ENCODE measurements at regions of chr2 and their contacts with region 1.

Region 1: DNA sequence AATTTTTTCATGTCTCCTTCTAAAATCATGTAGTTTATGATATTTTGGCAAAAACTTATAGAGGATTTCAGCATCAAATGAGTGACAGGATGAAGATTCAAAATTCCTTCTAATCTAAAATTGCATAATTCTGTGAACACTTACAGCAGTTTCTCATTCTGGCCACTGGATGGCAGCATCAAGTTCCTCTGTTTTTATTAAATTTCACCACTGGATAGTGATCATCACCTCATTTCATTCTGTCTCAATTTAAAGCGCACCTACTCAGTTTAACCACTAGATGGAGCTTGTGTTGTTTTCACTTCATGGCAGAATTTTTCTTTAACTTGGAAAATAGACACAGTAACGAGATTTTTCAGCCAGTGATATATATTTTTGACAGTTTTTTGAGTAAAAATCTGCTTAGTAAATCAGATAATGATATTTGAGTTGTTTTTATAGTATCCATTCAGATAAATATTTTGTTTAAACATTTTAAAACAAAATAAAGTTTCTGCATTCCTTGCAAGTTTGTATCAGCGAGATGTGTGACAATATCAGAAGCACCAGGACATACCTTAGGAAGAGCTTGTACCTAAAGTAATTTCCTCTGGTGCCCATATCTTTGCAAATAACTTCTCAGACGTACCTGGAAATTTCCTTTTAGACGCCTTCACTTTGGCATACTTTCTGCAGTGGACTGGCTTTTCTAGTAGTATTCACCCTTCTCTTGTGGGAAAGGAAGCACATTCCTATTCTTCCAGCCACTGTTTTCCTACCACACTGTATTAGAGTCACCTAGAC is 94.7 kb upstream of the ARHGAP15 start:
- DNase-seq: no peak
- H3K4me3 ChIP-seq: no peak overlapping the region
- H3K27ac ChIP-seq: no peak overlapping the region
- H3K4me1 ChIP-seq: no peaks in the 10 kb centered on the region
- H3K27me3 ChIP-seq: no peaks in the 10 kb centered on the region
- CTCF ChIP-seq: peak; percentile 92 to 97 (median 96)
- POLR2A ChIP-seq: no peak

Region 2: DNA sequence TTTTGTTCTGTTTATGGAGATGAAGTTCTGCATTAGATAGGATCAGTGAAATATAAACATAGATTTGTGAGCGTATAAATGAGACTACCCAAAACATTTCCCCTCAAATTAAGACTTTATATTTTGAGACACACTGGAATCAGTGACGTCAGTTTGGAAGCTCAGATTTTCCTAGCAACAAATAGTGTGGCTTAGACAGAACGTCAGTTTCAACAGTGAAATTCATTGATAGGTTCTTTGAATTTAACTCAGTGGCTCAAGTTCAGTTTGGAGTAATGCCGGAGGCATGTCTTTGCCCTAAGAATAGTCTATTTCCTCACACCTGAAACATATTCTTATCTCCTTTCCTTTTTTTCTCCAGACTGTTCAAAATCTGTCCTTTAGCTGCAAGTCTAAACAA is 18.8 kb before region 1 on chr2:
- intact Hi-C with region 1: loop called (anchors 1 kb)
- DNase-seq: no peak
- H3K4me3 ChIP-seq: no peak overlapping the region
- H3K27ac ChIP-seq: no peak overlapping the region
- H3K4me1 ChIP-seq: peaks cover 5% of the 10 kb centered on the region
- H3K27me3 ChIP-seq: no peaks in the 10 kb centered on the region
- CTCF ChIP-seq: no peak
- POLR2A ChIP-seq: no peak

Region 3: GRCh38 chr2:143575340-143575739 is 540.9 kb after region 1 on chr2:
- intact Hi-C with region 1: no loop called
- DNase-seq: no peak
- H3K4me3 ChIP-seq: no peak overlapping the region
- H3K27ac ChIP-seq: no peak overlapping the region
- H3K4me1 ChIP-seq: no peaks in the 10 kb centered on the region
- H3K27me3 ChIP-seq: no peaks in the 10 kb centered on the region
- CTCF ChIP-seq: no peak
- POLR2A ChIP-seq: no peak

Region 4: GRCh38 chr2:144529841-144530240 is 1495.4 kb after region 1 on chr2:
- intact Hi-C with region 1: no loop called
- DNase-seq: no peak
- H3K4me3 ChIP-seq: no peak overlapping the region
- H3K27ac ChIP-seq: no peak overlapping the region
- H3K4me1 ChIP-seq: no peaks in the 10 kb centered on the region
- H3K27me3 ChIP-seq: no peaks in the 10 kb centered on the region
- CTCF ChIP-seq: no peak
- POLR2A ChIP-seq: no peak